ENCODE measurements at regions of chr10 and their contacts with region 1.

Region 1: GRCh38 chr10:72692057-72692910 is at the start of gene MCU:
- ATAC-seq: peak; percentile 89 to 99 (median 98)
- H3K4me3 ChIP-seq: peak within 1 kb of the TSS; percentile 89 to 99 (median 98)
- H3K27ac ChIP-seq: peak within 1 kb of the TSS; percentile 81 to 82
- H3K4me1 ChIP-seq: peaks cover 7 to 8% of the 10 kb centered on the region in 2 donors
- total RNA-seq, gene MCU: 10.5 to 26.8 (median 17.6) TPM

Region 2: DNA sequence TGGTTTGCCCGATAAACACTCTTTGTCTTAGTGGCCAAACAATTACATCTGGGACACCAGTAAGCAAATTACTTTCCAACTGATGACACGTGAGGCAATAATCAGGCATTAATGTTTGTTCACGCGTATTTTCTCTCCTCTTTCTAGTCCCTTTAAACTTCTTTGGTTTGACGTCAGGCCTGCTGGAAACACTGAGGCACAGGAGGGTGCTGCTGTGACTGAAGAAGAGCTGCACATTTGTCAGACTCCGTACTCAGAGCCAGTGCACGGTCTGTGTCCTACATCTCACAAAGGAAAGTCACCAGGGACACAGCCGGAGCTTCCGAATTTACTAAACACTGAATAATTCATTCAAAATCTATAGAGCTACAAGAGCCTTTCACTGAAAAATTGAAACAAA is 534.1 kb before region 1 on chr10:
- in situ Hi-C with region 1: no loop called
- ATAC-seq: peak in 5 of 8 experiments; percentile 78 to 84 (median 83)
- H3K4me3 ChIP-seq: no peak overlapping the region
- H3K27ac ChIP-seq: no peak overlapping the region
- H3K4me1 ChIP-seq: peaks cover 9 to 16% of the 10 kb centered on the region in 2 donors

Region 3: DNA sequence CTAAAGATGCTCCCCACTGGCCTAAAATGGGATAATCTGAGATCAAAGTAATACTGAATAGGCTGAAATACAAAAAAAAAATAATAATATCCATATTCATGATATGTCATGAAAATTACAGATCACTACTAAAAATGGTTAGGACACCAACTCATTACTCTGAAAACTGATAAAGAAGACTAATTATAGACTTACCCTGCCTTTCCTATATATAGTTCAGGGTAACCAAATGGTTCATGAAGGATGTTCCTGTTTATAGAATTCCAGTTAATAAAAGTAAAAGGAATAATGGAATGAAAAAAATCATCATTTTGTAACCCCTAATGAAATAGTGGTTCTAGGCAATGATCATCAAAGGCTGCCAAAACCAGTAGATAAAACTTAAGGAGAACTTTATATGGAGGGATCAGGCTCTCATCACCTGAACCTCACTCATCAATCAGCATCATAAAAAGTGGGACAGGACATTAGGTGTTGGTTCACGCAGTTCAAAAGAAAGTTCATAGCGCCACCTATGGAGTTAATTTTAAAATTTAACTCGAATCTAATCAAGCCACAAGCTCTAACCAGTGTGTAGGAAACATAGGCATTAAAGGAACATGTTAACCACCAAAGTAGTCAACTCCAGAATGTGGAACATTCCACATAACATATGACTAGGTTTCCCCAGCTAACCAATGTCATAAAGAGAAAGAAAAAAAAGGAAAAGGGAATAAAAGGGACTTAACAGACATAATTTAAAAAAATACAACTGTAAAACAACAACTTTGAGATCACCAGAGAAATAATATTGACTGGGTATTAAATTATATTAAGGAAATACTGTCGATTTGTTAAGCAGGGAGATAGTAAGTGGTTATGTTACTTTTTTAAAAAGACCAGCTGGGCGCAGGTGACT is 368.7 kb after region 1 on chr10:
- in situ Hi-C with region 1: loop called in 1 of 9 experiments (anchors 25 kb)
- ATAC-seq: peak in 4 of 8 experiments; percentile 50 to 77 (median 70)
- H3K4me3 ChIP-seq: no peak overlapping the region
- H3K27ac ChIP-seq: no peak overlapping the region
- H3K4me1 ChIP-seq: no peaks in the 10 kb centered on the region

Measured in motor neuron (in vitro differentiated cells).